Dendritic cell treated with granulocyte-macrophage colony-stimulating factor and Interleukin-4, amounts not matched to agents 40 ng/mL and 50 ng/mL, for 4 days (primary cell): ENCODE measurements at regions of chr6 and their contacts with region 1.

Region 1: GRCh38 chr6:17156112-17156921 is 54.5 kb downstream of the STMND1 start:
- H3K4me3 Mint-ChIP-seq: no peak overlapping the region
- H3K27ac Mint-ChIP-seq: no peak overlapping the region
- H3K4me1 Mint-ChIP-seq: no peaks in the 10 kb centered on the region
- H3K27me3 Mint-ChIP-seq: peaks cover 7% of the 10 kb centered on the region

Region 2: DNA sequence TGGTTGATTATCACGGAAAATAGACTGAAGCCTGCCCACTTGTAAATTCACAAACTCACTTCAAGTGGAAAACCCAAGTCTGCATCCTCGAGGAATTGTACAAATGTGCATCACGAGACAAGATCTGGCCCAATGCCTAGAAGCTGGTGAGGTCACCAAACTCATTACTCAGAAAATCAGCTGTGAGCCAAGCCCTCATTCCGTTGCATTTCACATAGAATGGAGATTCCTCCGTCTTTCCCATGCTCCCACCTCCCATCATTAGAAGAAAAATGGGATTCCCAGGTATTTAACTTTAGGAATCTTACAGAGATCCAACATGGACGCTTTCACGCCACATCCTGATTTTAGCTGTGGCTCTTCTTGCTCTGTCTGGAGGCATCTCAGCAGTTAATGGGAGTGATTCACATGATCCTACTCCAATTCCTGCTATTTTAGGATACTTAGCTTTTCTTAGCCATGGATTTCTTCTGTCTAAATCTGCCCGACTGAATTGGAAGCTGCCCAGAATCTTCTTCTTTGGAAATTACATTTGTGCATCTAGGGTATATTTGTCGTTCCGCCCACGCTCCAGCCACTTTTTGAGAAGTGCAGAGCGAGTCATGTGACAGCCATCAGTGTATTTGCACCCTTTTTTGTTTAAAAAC is 123.2 kb before region 1 on chr6:
- intact Hi-C with region 1: no loop called
- H3K4me3 Mint-ChIP-seq: no peak overlapping the region
- H3K27ac Mint-ChIP-seq: no peak overlapping the region
- H3K4me1 Mint-ChIP-seq: peaks cover 6% of the 10 kb centered on the region
- H3K27me3 Mint-ChIP-seq: peaks cover 2% of the 10 kb centered on the region

Region 3: GRCh38 chr6:17584241-17584803 is 428.0 kb after region 1 on chr6:
- intact Hi-C with region 1: loop called (anchors 1 kb)
- H3K4me3 Mint-ChIP-seq: no peak overlapping the region
- H3K27ac Mint-ChIP-seq: no peak overlapping the region
- H3K4me1 Mint-ChIP-seq: peaks cover 21% of the 10 kb centered on the region
- H3K27me3 Mint-ChIP-seq: peaks cover 22% of the 10 kb centered on the region

Region 4: DNA sequence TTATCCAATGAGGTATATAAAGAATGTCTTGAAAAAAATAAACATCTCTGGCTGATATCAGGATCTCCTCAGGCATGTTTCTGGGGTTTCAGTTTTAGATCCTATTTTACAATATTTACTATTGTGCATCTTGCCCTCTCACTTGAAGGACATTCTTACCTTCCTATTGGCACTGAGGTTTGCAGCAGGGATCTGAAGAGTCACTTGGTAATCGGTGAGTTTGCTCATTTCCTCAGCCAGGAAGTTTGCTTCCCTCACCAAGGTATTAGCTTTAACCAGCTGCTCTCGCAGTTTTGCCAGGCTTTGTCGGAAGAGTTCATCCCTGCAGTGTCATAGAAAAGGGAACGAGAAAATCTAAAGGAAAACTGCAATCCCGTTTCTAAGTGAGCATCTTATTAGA is 652.3 kb after region 1 on chr6:
- intact Hi-C with region 1: loop called (anchors 1 kb)
- H3K4me3 Mint-ChIP-seq: no peak overlapping the region
- H3K27ac Mint-ChIP-seq: no peak overlapping the region
- H3K4me1 Mint-ChIP-seq: peaks cover 6% of the 10 kb centered on the region
- H3K27me3 Mint-ChIP-seq: no peaks in the 10 kb centered on the region

Region 5: GRCh38 chr6:17816921-17817611 is 660.7 kb after region 1 on chr6:
- intact Hi-C with region 1: loop called (anchors 5 kb)
- H3K4me3 Mint-ChIP-seq: no peak overlapping the region
- H3K27ac Mint-ChIP-seq: no peak overlapping the region
- H3K4me1 Mint-ChIP-seq: peaks cover 7% of the 10 kb centered on the region
- H3K27me3 Mint-ChIP-seq: no peaks in the 10 kb centered on the region

Region 6: DNA sequence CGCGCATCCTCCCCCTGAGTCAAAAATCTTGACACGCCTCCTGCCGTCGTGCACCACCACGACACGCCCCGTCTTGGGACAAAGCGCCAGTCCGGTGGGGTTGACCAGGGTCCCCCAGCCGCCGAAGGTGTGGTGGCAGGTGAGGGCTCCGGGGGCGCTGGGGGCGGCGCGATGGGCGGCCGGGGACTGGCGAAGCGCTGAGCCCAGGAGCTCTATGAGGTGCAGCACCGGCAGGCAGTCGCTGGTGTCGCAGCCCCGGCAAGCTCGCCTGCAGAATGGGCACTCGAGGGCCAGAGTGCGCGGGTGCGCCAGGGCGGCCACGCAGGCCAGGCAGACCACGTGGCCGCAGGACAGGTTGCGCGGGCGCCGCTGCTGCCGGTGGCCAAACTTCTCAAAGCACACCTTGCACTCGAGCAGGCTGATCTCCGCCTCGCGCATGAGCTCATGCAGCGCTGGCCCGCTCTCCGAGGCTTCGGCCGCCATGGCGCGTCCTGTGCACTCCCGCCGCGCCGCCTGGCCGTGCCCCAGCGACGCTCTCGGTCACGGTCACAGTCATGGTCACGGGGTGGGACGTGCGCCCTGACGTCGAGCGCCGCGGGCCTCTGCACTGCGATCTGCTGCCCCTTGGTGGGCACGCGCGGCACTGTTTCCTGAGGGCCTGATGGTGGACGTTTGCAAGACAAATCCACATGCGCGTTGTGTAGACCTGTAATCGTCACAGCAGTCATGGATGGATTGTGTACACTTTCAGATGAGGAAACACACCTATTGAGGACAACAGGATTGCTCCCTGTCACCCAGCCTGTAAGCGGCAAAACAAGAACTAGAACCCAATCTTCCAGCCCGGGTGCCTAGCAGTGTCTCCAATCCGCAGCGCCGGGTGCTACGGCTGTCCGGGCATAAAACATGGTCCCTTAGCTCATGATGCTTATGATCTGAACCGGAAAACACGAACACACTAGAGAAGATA is 966.1 kb after region 1 on chr6 and contains the start of gene NHLRC1:
- intact Hi-C with region 1: loop called (anchors 10 kb)
- H3K4me3 Mint-ChIP-seq: peak within 1 kb of the TSS; percentile 72
- H3K27ac Mint-ChIP-seq: peak within 1 kb of the TSS; percentile 84
- H3K4me1 Mint-ChIP-seq: peaks cover 15% of the 10 kb centered on the region
- H3K27me3 Mint-ChIP-seq: no peaks in the 10 kb centered on the region